Endothelial cell of umbilical vein (primary cell): ENCODE measurements at regions of chr11 and their contacts with region 1.

Region 1: DNA sequence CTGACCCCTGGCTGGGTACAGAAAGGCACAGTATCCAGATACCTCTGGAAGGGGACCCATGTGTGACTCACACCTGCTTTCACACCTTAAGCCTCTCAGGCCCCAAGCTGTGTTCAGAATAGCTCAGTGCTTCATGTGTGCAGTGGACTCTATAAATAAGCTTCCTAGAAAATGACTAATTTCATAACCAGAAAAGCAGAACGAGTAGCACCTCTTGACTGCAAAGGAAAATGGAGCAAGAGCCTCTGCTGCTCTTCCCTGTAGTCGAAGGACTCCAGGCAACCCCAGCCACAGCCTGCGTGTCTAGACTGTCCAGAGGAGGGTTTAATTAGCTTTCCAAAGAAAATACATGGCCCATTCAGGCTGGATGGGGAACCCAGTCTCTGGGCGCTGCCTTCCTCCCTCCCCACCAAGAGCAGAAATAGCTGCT is 23.1 kb downstream of the PTPN5 start:
- DNase-seq: no peak
- H3K4me3 ChIP-seq: no peak overlapping the region
- H3K27ac ChIP-seq: no peak overlapping the region
- H3K4me1 ChIP-seq: peaks cover 11% of the 10 kb centered on the region
- H3K27me3 ChIP-seq: peaks cover 0 to 3% of the 10 kb centered on the region in 2 experiments
- CTCF ChIP-seq: no peak
- POLR2A ChIP-seq: no peak

Region 2: GRCh38 chr11:18115360-18116127 is 652.9 kb before region 1 on chr11:
- CTCF ChIA-PET with region 1: interaction called, 17 read pairs
- POLR2A ChIA-PET with region 1: no interaction called
- dilution Hi-C with region 1: no loop called
- intact Hi-C with region 1: loop called (anchors 1 kb)
- DNase-seq: peak; percentile 62
- H3K4me3 ChIP-seq: no peak overlapping the region
- H3K27ac ChIP-seq: no peak overlapping the region
- H3K4me1 ChIP-seq: no peaks in the 10 kb centered on the region
- H3K27me3 ChIP-seq: peaks cover 10 to 30% of the 10 kb centered on the region in 2 experiments
- CTCF ChIP-seq: peak; percentile 80 to 81
- POLR2A ChIP-seq: no peak

Region 3: DNA sequence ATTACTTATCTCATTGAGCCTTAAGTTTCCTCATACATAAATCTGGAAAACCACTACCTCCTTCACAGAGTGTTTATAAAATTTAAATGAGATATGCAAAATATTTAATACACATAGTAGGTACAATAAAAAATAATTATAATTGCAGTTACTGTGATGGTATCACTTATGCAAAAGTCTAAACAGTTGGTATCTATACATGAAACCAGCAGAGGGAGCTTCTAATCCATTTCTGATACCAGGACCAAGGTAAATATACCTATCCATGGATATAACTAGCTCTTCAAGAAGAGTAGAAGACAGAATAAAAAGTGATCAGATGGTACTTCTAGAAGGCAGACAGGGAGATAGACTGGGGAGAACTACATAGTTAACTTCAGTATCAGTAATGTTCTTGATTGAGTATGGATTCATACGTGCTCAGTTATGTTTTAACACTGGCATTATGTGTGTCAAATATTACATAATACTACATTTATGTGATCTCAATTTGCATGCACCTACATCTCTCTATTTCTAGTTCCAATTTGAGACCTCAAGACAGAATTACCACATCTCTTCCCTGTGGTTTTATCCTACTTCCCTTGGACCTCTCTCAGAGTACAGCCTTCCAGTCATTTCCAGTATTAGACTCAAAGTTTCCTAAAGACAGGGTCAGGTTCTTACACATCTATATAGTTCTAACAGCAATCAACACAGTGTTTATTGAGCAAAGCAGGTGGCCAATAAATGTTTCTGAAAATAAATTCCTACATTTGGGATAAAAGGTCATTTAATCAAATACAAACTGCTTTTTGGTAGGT is 228.1 kb before region 1 on chr11:
- CTCF ChIA-PET with region 1: interaction called, 32 read pairs
- POLR2A ChIA-PET with region 1: no interaction called
- dilution Hi-C with region 1: no loop called
- intact Hi-C with region 1: loop called (anchors 1 kb)
- DNase-seq: peak; percentile 43
- H3K4me3 ChIP-seq: no peak overlapping the region
- H3K27ac ChIP-seq: no peak overlapping the region
- H3K4me1 ChIP-seq: no peaks in the 10 kb centered on the region
- H3K27me3 ChIP-seq: no peaks in the 10 kb centered on the region
- CTCF ChIP-seq: peak in 1 of 2 donors; percentile 26
- POLR2A ChIP-seq: no peak

Region 4: GRCh38 chr11:18698341-18699268 is 69.9 kb before region 1 on chr11 and contains the start of gene TMEM86A:
- CTCF ChIA-PET with region 1: interaction called, 3 read pairs
- POLR2A ChIA-PET with region 1: no interaction called
- dilution Hi-C with region 1: no loop called
- intact Hi-C with region 1: loop called (anchors 1 kb)
- DNase-seq: peak; percentile 88
- H3K4me3 ChIP-seq: peak within 1 kb of the TSS; percentile 30 to 59 (median 48)
- H3K27ac ChIP-seq: no peak within 1 kb of the TSS
- H3K4me1 ChIP-seq: peaks cover 11% of the 10 kb centered on the region
- H3K27me3 ChIP-seq: no peaks in the 10 kb centered on the region
- CTCF ChIP-seq: no peak
- POLR2A ChIP-seq: peak; percentile 32
- total RNA-seq, gene TMEM86A: 2.5 and 2.6 TPM in 2 replicates

Region 5: DNA sequence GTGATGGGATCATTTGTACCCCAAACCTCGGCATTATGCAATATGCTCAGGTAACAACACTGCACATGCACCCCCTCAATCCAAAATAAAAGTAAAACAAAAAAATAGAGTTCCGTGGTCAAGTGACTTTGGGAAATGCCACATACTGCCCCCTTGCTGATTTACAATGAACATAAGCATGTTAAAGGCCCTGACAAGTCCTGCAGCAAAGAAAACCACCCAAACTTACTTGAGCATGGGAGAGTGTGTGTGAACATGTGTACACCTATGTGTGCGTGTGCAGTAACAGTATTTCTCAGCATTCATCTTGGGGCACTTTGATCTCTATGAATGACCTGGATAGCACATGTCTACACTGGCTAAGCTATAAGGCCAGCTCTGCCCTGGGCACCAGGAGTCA is 26.7 kb before region 1 on chr11:
- CTCF ChIA-PET with region 1: interaction called, 22 read pairs
- POLR2A ChIA-PET with region 1: no interaction called
- dilution Hi-C with region 1: no loop called
- intact Hi-C with region 1: no loop called
- DNase-seq: no peak
- H3K4me3 ChIP-seq: no peak overlapping the region
- H3K27ac ChIP-seq: no peak overlapping the region
- H3K4me1 ChIP-seq: no peaks in the 10 kb centered on the region
- H3K27me3 ChIP-seq: peaks cover 0 to under 1% of the 10 kb centered on the region in 2 experiments
- CTCF ChIP-seq: no peak
- POLR2A ChIP-seq: no peak

Region 6: GRCh38 chr11:19071255-19071654 is 302.8 kb after region 1 on chr11:
- CTCF ChIA-PET with region 1: no interaction called
- POLR2A ChIA-PET with region 1: no interaction called
- dilution Hi-C with region 1: no loop called
- intact Hi-C with region 1: no loop called
- DNase-seq: peak; percentile 84
- H3K4me3 ChIP-seq: no peak overlapping the region
- H3K27ac ChIP-seq: no peak overlapping the region
- H3K4me1 ChIP-seq: no peaks in the 10 kb centered on the region
- H3K27me3 ChIP-seq: peaks cover 13 to 23% of the 10 kb centered on the region in 2 experiments
- CTCF ChIP-seq: peak; percentile 89 to 98
- POLR2A ChIP-seq: no peak